H1 (cell line): ENCODE measurements at regions of chr15 and their contacts with region 1.

Region 1: DNA sequence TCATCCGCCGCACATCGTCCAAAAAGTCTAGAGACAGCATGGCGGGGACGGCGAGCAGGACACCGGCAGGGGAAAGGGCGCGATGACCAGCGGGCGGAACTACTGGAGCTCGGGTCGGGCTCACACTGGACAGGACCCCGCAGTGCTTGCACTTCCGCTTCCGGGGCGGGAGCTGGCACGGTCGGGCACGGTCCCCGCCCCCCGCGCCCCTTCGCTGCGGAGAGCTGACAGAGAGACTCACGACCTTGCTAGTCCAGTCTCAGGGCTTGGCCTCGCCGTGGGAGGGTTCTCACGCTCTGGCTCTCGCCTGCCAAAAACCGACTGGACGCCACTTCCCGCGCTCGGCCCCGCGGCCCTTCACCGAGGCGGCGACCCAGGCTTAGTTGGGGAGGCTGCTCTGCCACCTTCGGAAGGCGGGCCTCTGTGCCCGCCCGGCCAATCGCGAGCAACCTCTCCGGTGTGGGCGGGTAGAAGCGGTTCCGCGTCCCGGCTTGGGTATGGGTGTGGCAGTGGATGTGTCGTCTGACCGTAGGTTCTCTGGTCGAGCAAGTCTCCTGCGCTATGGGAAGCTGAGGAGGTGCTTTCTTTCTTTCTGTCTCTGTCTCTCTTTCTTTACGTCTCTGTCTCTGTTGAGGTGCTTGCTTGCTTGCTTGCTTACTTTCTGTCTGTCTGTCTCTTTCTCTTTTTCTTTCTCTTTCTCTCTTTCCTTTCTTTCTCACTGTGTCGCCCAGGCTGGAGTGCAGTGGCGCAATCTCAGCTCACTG is at the start of gene SEC11A:
- DNase-seq: peak; percentile 78 to 97
- H3K4me3 ChIP-seq: peak within 1 kb of the TSS; percentile 88 to 95 (median 90)
- H3K27ac ChIP-seq: peak within 1 kb of the TSS; percentile 85
- H3K4me1 ChIP-seq: peaks cover 0 to 8% (median 1%) of the 10 kb centered on the region in 4 experiments; a peak in 3 of 7 replicates
- H3K27me3 ChIP-seq: no peaks in the 10 kb centered on the region
- CTCF ChIP-seq: no peak
- EP300 ChIP-seq: no peak
- POLR2A ChIP-seq: peak; percentile 82 to 96
- RAD21 ChIP-seq: no peak
- total RNA-seq, gene SEC11A: 250 and 268 TPM in 2 replicates

Region 2: GRCh38 chr15:84727429-84727828 is 11.2 kb after region 1 on chr15:
- CTCF ChIA-PET with region 1: interaction called, 21 read pairs
- POLR2A ChIA-PET with region 1: interaction called, 16 read pairs
- DNase-seq: no peak
- H3K4me3 ChIP-seq: no peak overlapping the region
- H3K27ac ChIP-seq: no peak overlapping the region
- H3K4me1 ChIP-seq: no peaks in the 10 kb centered on the region
- H3K27me3 ChIP-seq: no peaks in the 10 kb centered on the region
- CTCF ChIP-seq: no peak
- EP300 ChIP-seq: no peak
- POLR2A ChIP-seq: no peak
- RAD21 ChIP-seq: no peak

Region 3: DNA sequence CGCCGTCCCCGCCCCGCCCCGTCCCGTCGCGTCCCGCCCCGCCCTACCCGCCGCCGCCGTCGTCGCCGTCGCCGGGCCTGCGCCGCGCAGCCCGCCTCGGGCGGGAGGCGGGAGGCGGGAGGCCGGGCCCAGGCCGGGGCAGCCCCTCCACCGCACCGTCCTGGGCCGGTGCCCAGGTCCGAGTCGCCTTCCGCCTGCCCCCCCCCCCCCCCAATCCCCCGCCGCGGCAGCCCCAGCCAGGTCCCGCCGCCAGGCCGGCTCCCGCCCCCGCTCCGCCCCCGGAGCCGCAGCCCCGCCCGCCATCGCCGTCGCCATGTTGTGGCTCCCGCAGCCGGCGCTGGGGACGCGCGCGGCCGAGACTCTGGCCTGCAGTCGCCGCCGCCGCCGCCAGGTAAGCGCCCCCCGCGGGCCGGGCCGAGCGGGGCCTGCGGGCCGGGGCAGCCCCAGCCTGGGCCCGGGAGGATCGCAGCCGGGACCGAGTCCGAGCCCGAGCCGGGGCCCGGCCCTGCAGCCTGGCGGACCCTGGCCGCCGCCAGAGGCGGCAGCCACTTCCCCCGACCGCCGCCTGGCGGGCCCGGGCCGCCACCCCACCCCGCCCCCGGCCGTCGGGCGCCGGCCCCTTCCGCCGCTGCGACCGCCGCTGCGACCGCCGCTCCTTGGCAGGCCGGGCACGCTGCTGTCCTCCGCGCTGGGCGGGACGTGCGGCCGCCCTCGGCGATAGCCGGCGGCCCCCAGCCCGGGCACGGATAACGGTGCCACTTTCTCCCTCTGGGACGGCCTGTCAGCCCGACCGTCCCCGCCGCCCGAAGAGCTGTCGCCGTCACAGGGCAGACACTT is 32.3 kb after region 1 on chr15 and contains the start of gene ZNF592:
- CTCF ChIA-PET with region 1: interaction called, 6 read pairs
- POLR2A ChIA-PET with region 1: interaction called, 42 read pairs
- DNase-seq: peak in 1 of 2 experiments; percentile 82
- H3K4me3 ChIP-seq: peak within 1 kb of the TSS; percentile 66 to 91 (median 81)
- H3K27ac ChIP-seq: peak within 1 kb of the TSS; percentile 87
- H3K4me1 ChIP-seq: peaks cover 3 to 13% (median 11%) of the 10 kb centered on the region in 4 experiments
- H3K27me3 ChIP-seq: no peaks in the 10 kb centered on the region
- CTCF ChIP-seq: peak in 2 of 3 experiments; percentile 13 to 30; a peak in 3 of 4 replicates
- EP300 ChIP-seq: 0 out of 3 replicates have a peak, but pooled peaks of 1 of the 2 experiments have one; percentile 23
- POLR2A ChIP-seq: peak in 1 of 2 experiments; percentile 54; a peak in 2 of 3 replicates
- RAD21 ChIP-seq: peak in 1 of 2 experiments; percentile 16; a peak in 1 of 4 replicates
- total RNA-seq, gene ZNF592: 31.2 and 33.0 TPM in 2 replicates

Region 4: DNA sequence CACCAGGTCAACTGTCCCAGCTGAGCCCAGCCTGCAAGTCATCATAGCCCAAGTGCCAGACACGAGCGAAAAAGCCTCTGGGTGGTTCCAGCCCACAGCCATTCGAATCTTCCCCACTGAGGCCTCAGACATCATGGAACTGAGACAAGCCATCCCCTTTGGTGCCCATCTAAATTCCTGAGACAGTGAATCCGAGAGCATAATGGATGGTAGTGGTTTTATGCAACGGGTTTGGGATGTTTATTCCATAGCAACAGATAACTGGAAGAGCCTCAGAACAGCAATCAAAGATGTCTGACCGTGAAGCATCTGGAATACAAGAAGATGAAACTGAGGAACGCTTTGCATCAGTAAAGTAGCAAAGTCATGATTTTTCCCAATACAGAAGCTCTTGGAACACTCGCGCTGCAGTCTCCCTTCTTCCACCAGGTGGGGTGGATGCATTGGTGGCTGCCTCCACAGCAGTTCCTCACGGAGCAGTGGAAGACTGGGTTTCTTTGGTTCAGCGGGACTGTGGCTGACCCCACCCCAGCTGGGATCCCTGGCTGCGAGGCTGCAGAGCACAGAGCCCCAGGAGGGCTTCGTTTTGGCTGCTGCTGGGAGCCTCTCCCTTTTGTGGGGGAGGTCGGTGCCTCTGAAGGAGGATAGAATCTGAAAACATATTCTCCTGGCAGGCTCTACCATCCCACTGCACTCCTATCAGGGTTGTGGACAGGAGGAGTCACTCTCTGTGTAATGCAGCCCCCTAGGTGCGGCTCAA is 239.1 kb after region 1 on chr15:
- CTCF ChIA-PET with region 1: no interaction called
- POLR2A ChIA-PET with region 1: no interaction called
- DNase-seq: peak in 1 of 2 experiments; percentile 70
- H3K4me3 ChIP-seq: no peak overlapping the region
- H3K27ac ChIP-seq: no peak overlapping the region
- H3K4me1 ChIP-seq: peaks cover 0 to 9% (median 1%) of the 10 kb centered on the region in 4 experiments; a peak in 4 of 7 replicates
- H3K27me3 ChIP-seq: no peaks in the 10 kb centered on the region
- CTCF ChIP-seq: peak; percentile 80 to 87 (median 81)
- EP300 ChIP-seq: no peak
- POLR2A ChIP-seq: no peak
- RAD21 ChIP-seq: peak; percentile 83 to 86